Endothelial cell of umbilical vein (primary cell): ENCODE measurements at regions of chr11 and their contacts with region 1.

Region 1: GRCh38 chr11:110195845-110196754 is 100.3 kb downstream of the RDX start:
- DNase-seq: peak; percentile 45
- H3K4me3 ChIP-seq: no peak overlapping the region
- H3K27ac ChIP-seq: peak overlapping the region; percentile 78
- H3K4me1 ChIP-seq: peaks cover 36% of the 10 kb centered on the region
- H3K27me3 ChIP-seq: no peaks in the 10 kb centered on the region
- CTCF ChIP-seq: no peak
- POLR2A ChIP-seq: peak; percentile 42

Region 2: DNA sequence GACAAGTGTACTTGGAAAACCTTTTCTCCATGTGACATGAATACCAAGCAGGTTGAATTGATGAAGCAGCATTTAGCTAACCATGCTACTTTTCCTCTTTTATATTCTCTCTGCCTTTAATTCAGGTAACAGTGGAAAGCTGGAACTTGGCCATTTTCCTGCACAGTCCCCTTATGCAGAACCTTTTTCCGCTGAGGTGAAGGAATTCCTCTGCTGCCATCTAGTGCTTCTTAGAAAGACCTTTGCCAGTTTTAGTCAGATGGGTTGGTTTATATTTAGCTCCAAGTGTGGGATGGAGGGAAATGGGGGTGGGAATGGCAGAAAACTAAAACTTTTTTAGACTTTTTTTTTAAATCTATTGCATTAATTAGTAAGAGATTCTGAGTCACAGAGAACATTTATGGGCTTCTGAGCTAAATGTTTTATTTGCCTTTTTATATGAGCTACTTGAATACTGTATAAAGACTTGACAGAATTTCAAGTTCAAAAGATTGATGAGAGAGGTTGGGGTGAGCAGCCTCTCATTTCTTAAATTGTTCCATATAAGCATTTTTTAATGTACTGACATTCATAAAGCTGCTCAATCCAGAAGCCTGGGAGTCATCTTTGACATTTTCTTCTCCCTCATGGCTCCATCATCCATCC is 256.8 kb before region 1 on chr11:
- CTCF ChIA-PET with region 1: interaction called, 15 read pairs
- POLR2A ChIA-PET with region 1: no interaction called
- dilution Hi-C with region 1: no loop called
- intact Hi-C with region 1: no loop called
- DNase-seq: peak; percentile 80
- H3K4me3 ChIP-seq: no peak overlapping the region
- H3K27ac ChIP-seq: no peak overlapping the region
- H3K4me1 ChIP-seq: no peaks in the 10 kb centered on the region
- H3K27me3 ChIP-seq: no peaks in the 10 kb centered on the region
- CTCF ChIP-seq: peak; percentile 57 to 61
- POLR2A ChIP-seq: no peak

Region 3: GRCh38 chr11:110148775-110149744 is 47.0 kb before region 1 on chr11:
- CTCF ChIA-PET with region 1: no interaction called
- POLR2A ChIA-PET with region 1: no interaction called
- dilution Hi-C with region 1: no loop called
- intact Hi-C with region 1: loop called (anchors 2 kb)
- DNase-seq: peak; percentile 79
- H3K4me3 ChIP-seq: no peak overlapping the region
- H3K27ac ChIP-seq: peak overlapping the region; percentile 74
- H3K4me1 ChIP-seq: peaks cover 33% of the 10 kb centered on the region
- H3K27me3 ChIP-seq: no peaks in the 10 kb centered on the region
- CTCF ChIP-seq: no peak
- POLR2A ChIP-seq: no peak

Region 4: DNA sequence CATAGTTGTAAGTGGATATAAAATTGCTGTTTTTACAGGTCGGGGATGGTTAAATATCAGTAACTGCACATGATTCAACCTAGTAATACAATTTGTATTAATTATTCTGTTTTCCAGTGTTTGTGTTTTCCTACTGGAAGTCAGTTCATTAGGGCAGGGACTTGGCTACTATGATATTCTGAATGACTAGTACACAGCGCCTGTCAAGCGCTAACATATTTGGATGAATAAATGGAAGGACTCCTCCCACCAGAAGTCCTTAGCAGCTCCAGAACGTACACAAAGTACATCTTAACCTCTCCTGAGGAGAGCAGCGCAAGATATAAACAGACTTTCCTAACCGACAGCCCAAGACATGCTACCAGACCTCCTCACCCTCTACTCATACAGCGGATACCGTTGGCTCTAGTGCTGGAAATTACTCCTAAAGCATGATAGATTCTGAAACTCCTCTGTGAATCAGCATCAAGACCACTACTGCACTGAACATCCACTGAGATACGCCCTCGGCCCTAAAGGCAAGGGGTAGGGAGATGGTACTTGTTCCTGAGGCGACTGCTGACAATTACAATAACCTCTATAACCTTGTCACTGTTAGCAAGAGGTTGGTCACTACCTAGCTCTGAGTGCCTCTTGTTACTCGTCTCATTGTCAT is 21.2 kb after region 1 on chr11:
- CTCF ChIA-PET with region 1: no interaction called
- POLR2A ChIA-PET with region 1: no interaction called
- dilution Hi-C with region 1: no loop called
- intact Hi-C with region 1: no loop called
- DNase-seq: no peak
- H3K4me3 ChIP-seq: no peak overlapping the region
- H3K27ac ChIP-seq: no peak overlapping the region
- H3K4me1 ChIP-seq: no peaks in the 10 kb centered on the region
- H3K27me3 ChIP-seq: no peaks in the 10 kb centered on the region
- CTCF ChIP-seq: no peak
- POLR2A ChIP-seq: no peak

Region 5: GRCh38 chr11:110296226-110297075 is 100.4 kb after region 1 on chr11 and contains the start of gene RDX:
- CTCF ChIA-PET with region 1: interaction called, 12 read pairs
- POLR2A ChIA-PET with region 1: no interaction called
- dilution Hi-C with region 1: no loop called
- intact Hi-C with region 1: loop called (anchors 1 kb)
- DNase-seq: peak; percentile 78
- H3K4me3 ChIP-seq: peak within 1 kb of the TSS; percentile 94 to 96 (median 95)
- H3K27ac ChIP-seq: peak within 1 kb of the TSS; percentile 96
- H3K4me1 ChIP-seq: peaks cover 31% of the 10 kb centered on the region
- H3K27me3 ChIP-seq: no peaks in the 10 kb centered on the region
- CTCF ChIP-seq: peak in 1 of 2 donors; percentile 1
- POLR2A ChIP-seq: peak; percentile 75
- total RNA-seq, gene RDX: 239 and 280 TPM in 2 replicates

Region 6: DNA sequence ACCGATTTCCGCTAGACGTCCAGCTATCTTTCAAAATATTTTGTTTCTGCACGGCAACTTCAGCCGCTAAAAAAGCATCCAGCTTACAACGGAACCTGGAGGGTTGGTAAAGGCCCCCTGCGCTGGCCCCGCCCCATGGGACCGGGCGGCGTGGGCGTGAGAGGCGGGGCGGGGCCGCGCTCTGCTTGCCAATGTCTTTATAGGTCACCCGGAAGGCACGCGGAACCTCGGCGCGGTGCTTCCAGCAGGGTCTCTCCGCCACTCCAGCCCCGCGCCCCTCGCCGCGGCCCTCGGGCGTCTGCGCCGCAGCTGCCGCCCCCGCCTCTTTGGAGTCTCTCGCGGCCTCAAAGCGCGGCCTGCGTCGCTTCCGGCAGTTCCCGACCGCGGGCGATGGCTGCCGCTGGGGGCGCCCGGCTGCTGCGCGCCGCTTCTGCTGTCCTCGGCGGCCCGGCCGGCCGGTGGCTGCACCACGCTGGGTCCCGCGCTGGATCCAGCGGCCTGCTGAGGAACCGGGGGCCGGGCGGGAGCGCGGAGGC is 233.7 kb after region 1 on chr11 and contains the start of gene FDX1:
- CTCF ChIA-PET with region 1: interaction called, 143 read pairs
- POLR2A ChIA-PET with region 1: interaction called, 3 read pairs
- dilution Hi-C with region 1: no loop called
- intact Hi-C with region 1: loop called (anchors 1 kb)
- DNase-seq: peak; percentile 84
- H3K4me3 ChIP-seq: peak within 1 kb of the TSS; percentile 23 to 75 (median 57)
- H3K27ac ChIP-seq: peak within 1 kb of the TSS; percentile 72
- H3K4me1 ChIP-seq: peaks cover 27% of the 10 kb centered on the region
- H3K27me3 ChIP-seq: no peaks in the 10 kb centered on the region
- CTCF ChIP-seq: peak; percentile 50 to 59
- POLR2A ChIP-seq: no peak
- total RNA-seq, gene FDX1: 9.9 and 11.0 TPM in 2 replicates